B cell (primary cell): ENCODE measurements at regions of chr1 and their contacts with region 1.

Region 1: DNA sequence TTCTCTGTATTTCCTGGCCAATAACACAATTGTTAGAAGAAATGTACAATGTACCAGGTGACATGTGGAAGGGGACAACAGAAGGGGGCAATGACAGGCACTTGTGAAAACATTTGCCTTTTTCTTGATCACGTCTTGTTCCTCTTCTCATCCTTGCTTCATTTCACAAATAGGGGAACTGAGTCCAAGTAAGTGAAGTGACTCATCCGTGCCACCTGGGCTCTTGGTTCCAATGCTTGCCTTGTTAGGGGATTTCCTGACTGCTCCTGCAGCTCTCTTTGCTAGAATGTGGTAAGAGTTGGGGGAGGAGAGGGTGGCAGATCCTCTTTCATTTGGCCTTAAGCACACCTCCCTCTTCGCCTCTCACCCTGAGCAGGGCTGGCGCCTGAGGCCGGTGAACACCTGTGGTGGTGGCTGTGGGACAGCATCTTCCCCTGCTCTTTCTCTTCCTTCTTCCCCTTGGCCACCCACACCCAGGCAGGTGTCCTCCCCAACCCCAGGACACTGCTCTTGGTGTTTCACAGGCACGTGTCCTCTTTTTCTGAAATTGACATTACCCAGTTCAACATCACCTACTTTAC is 2.2 kb upstream of the RHEX start:
- DNase-seq: peak; percentile 96
- ATAC-seq: peak; percentile 93
- H3K4me3 ChIP-seq: peak overlapping the region in 1 of 5 experiments; percentile 42
- H3K4me3 Mint-ChIP-seq: peak overlapping the region; percentile 91
- H3K27ac ChIP-seq: peak overlapping the region; percentile 91 to 93
- H3K27ac Mint-ChIP-seq: peak overlapping the region; percentile 99
- H3K4me1 ChIP-seq: peaks cover 71 to 80% of the 10 kb centered on the region in 2 donors
- H3K4me1 Mint-ChIP-seq: peaks cover 89% of the 10 kb centered on the region
- H3K27me3 ChIP-seq: no peaks in the 10 kb centered on the region
- H3K27me3 Mint-ChIP-seq: no peaks in the 10 kb centered on the region
- CTCF ChIP-seq: peak; percentile 57

Region 2: DNA sequence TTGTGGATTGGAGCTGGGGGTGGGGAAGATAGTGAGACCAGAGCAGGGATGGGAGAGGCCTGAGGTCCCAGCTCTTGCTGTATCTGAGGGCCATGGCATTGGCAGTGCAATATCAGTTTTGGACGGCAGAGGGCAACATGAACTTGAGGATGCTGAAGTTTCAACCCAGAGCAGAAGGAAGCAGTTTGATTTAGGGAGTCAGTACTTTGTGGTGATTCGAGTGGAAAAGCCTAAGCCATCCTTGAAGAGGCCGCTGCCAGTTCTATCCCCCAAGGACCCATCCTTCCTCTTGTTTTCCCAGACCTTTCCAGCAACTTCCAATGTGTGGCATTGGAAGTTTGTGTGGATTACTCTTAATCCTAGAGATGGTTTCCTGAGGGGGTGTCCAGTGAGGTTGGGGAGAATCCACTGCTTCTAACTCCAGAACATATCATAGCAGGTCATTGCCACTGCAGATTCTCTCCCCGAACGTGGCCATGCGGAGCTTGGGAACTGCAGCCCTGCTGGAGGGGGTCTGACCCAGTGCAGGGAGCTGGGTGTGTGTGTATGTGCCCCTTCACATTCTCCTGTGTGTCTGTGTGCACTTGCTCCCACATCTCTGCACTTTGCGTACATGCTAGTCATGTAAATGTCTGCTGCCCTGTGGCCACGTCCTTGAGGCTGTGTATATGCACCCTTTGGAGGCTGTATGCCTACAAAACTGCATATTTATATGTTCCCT is 131.6 kb before region 1 on chr1:
- CTCF ChIA-PET with region 1: no interaction called
- POLR2A ChIA-PET with region 1: no interaction called
- intact Hi-C with region 1: no loop called
- DNase-seq: peak; percentile 80
- ATAC-seq: peak; percentile 71
- H3K4me3 ChIP-seq: no peak overlapping the region
- H3K4me3 Mint-ChIP-seq: no peak overlapping the region
- H3K27ac ChIP-seq: no peak overlapping the region
- H3K27ac Mint-ChIP-seq: no peak overlapping the region
- H3K4me1 ChIP-seq: no peaks in the 10 kb centered on the region
- H3K4me1 Mint-ChIP-seq: peaks cover 2% of the 10 kb centered on the region
- H3K27me3 ChIP-seq: no peaks in the 10 kb centered on the region
- H3K27me3 Mint-ChIP-seq: peaks cover 4% of the 10 kb centered on the region
- CTCF ChIP-seq: peak; percentile 93

Region 3: GRCh38 chr1:206012086-206012859 is 38.5 kb before region 1 on chr1:
- CTCF ChIA-PET with region 1: no interaction called
- POLR2A ChIA-PET with region 1: no interaction called
- intact Hi-C with region 1: loop called (anchors 1 kb)
- DNase-seq: peak; percentile 93
- ATAC-seq: peak; percentile 99
- H3K4me3 ChIP-seq: peak overlapping the region in 4 of 5 experiments; percentile 23 to 55 (median 44)
- H3K4me3 Mint-ChIP-seq: peak overlapping the region; percentile 81
- H3K27ac ChIP-seq: peak overlapping the region; percentile 77 to 87
- H3K27ac Mint-ChIP-seq: peak overlapping the region; percentile 95
- H3K4me1 ChIP-seq: peaks cover 21 to 24% of the 10 kb centered on the region in 2 donors
- H3K4me1 Mint-ChIP-seq: peaks cover 32% of the 10 kb centered on the region
- H3K27me3 ChIP-seq: no peaks in the 10 kb centered on the region
- H3K27me3 Mint-ChIP-seq: no peaks in the 10 kb centered on the region
- CTCF ChIP-seq: peak; percentile 25

Region 4: DNA sequence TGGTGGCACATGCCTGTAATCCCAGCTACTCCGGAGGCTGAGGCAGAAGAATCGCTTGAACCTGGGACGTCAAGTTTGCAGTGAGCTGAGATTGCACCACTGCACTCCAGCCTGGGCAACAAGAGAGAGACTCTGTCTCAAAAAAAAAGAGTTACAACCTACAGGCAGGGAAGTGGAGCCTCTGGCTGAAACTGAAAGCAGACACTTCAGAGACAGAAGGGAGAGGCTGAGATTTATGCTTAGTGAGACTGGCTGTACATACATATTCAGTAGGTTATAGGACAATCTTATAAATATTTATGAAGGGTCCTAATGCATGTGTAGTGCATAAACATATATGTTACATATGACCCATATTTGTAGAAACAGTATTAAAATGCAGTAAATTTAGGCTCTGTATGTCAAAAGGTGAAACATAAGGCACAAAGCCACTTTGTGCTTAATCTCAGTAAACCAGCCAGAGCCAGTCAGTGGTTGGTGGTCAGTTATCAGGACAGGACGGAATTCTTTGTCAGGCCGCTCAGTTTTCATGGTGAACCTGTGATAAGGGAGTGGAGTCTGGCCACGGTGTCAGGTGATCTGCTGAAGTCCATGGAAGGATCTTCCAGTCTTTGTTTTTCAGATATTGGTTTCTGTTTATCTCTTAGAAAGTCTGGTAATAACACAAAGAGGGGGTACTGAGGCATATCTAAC is 15.9 kb after region 1 on chr1:
- CTCF ChIA-PET with region 1: no interaction called
- POLR2A ChIA-PET with region 1: no interaction called
- intact Hi-C with region 1: loop called (anchors 2 kb)
- DNase-seq: peak; percentile 72
- ATAC-seq: peak; percentile 78
- H3K4me3 ChIP-seq: no peak overlapping the region
- H3K4me3 Mint-ChIP-seq: peak overlapping the region; percentile 75
- H3K27ac ChIP-seq: peak overlapping the region; percentile 63 to 75
- H3K27ac Mint-ChIP-seq: peak overlapping the region; percentile 88
- H3K4me1 ChIP-seq: peaks cover 35 to 43% of the 10 kb centered on the region in 2 donors
- H3K4me1 Mint-ChIP-seq: peaks cover 49% of the 10 kb centered on the region
- H3K27me3 ChIP-seq: no peaks in the 10 kb centered on the region
- H3K27me3 Mint-ChIP-seq: no peaks in the 10 kb centered on the region
- CTCF ChIP-seq: no peak